ENCODE measurements at regions of chr11 and their contacts with region 1.

Region 1: GRCh38 chr11:128757235-128757711 is 63.4 kb downstream of the FLI1 start:
- DNase-seq: peak; percentile 48 to 90 (median 71)
- ATAC-seq: peak; percentile 99
- H3K4me3 ChIP-seq: no peak overlapping the region
- H3K4me3 Mint-ChIP-seq: peak overlapping the region; percentile 35
- H3K27ac ChIP-seq: peak overlapping the region in 1 of 2 experiments; percentile 30
- H3K27ac Mint-ChIP-seq: peak overlapping the region; percentile 88
- H3K4me1 ChIP-seq: peaks cover 67% of the 10 kb centered on the region
- H3K4me1 Mint-ChIP-seq: peaks cover 89% of the 10 kb centered on the region
- H3K27me3 ChIP-seq: no peaks in the 10 kb centered on the region
- H3K27me3 Mint-ChIP-seq: no peaks in the 10 kb centered on the region
- CTCF ChIP-seq: peak; percentile 76

Region 2: DNA sequence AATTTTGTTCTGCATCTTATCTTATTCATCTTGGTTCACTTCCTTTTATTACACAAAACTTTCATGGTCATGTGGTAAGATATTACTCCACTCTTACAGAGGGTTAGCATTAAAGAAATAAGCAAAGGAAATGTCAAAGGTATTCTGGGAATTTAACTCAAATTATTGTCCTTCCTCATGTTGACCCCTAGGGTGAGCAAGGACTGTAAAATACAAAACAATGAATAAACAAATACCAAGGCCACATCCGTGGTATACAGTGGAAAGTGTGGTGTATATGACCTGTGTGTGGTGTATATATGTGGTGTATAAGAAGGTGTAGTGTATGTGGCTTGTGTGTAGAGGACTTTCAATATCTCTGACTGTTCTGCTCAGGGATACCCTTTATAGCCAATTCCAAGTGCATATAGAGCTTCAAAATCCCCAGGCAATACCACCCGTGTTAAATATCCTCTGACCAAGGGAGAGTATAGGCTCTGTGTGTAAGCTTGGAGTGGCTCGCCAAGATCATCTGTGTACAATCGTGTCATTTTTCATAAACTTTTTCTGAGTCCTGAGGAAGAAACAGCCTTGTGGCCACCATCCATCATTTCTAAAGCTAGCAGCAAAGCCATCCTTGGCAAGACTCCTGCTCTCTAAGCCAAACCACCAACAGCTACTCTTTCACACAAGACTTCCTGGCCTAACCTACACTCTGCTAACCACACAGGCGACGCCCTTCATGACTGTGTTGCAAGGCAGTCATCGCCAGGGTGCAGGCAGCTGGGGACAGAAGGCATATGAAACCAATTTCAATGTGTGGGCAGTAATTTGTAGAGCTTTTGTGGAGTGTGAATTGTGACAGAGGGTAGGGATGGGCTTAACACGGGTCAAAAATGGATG is 717.9 kb before region 1 on chr11:
- CTCF ChIA-PET with region 1: no interaction called
- POLR2A ChIA-PET with region 1: interaction called, 3 read pairs
- intact Hi-C with region 1: loop called in 1 of 2 experiments (anchors 5 kb)
- DNase-seq: peak; percentile 48 to 94 (median 79)
- ATAC-seq: peak; percentile 91
- H3K4me3 ChIP-seq: peak overlapping the region; percentile 40 to 50
- H3K4me3 Mint-ChIP-seq: peak overlapping the region; percentile 59
- H3K27ac ChIP-seq: peak overlapping the region; percentile 55 to 80
- H3K27ac Mint-ChIP-seq: peak overlapping the region; percentile 87
- H3K4me1 ChIP-seq: peaks cover 76% of the 10 kb centered on the region
- H3K4me1 Mint-ChIP-seq: peaks cover 56% of the 10 kb centered on the region
- H3K27me3 ChIP-seq: no peaks in the 10 kb centered on the region
- H3K27me3 Mint-ChIP-seq: no peaks in the 10 kb centered on the region
- CTCF ChIP-seq: peak; percentile 22

Region 3: GRCh38 chr11:128512474-128512996 is 244.7 kb before region 1 on chr11:
- CTCF ChIA-PET with region 1: interaction called, 4 read pairs
- POLR2A ChIA-PET with region 1: no interaction called
- intact Hi-C with region 1: loop called (anchors 2 to 5 kb)
- DNase-seq: peak in 4 of 9 experiments; percentile 37 to 58 (median 44)
- ATAC-seq: peak; percentile 13
- H3K4me3 ChIP-seq: peak overlapping the region; percentile 45 to 94
- H3K4me3 Mint-ChIP-seq: peak overlapping the region; percentile 98
- H3K27ac ChIP-seq: peak overlapping the region; percentile 33 to 75
- H3K27ac Mint-ChIP-seq: peak overlapping the region; percentile 98
- H3K4me1 ChIP-seq: peaks cover 71% of the 10 kb centered on the region
- H3K4me1 Mint-ChIP-seq: peaks cover 91% of the 10 kb centered on the region
- H3K27me3 ChIP-seq: no peaks in the 10 kb centered on the region
- H3K27me3 Mint-ChIP-seq: no peaks in the 10 kb centered on the region
- CTCF ChIP-seq: no peak

Region 4: GRCh38 chr11:128686745-128687177 is 70.5 kb before region 1 on chr11:
- CTCF ChIA-PET with region 1: interaction called, 8 read pairs
- POLR2A ChIA-PET with region 1: interaction called, 6 read pairs
- intact Hi-C with region 1: loop called (anchors 2 to 10 kb)
- DNase-seq: peak in 7 of 9 experiments; percentile 41 to 73 (median 66)
- ATAC-seq: peak; percentile 81
- H3K4me3 ChIP-seq: peak overlapping the region; percentile 53 to 61
- H3K4me3 Mint-ChIP-seq: peak overlapping the region; percentile 86
- H3K27ac ChIP-seq: no peak overlapping the region
- H3K27ac Mint-ChIP-seq: no peak overlapping the region
- H3K4me1 ChIP-seq: peaks cover 34% of the 10 kb centered on the region
- H3K4me1 Mint-ChIP-seq: peaks cover 41% of the 10 kb centered on the region
- H3K27me3 ChIP-seq: peaks cover 4 to 32% of the 10 kb centered on the region in 2 experiments
- H3K27me3 Mint-ChIP-seq: peaks cover 29% of the 10 kb centered on the region
- CTCF ChIP-seq: no peak

Region 5: GRCh38 chr11:128716661-128717210 is 40.5 kb before region 1 on chr11:
- CTCF ChIA-PET with region 1: interaction called, 11 read pairs
- POLR2A ChIA-PET with region 1: no interaction called
- intact Hi-C with region 1: no loop called
- DNase-seq: peak in 6 of 9 experiments; percentile 55 to 85 (median 70)
- ATAC-seq: peak; percentile 64
- H3K4me3 ChIP-seq: peak overlapping the region; percentile 9 to 14
- H3K4me3 Mint-ChIP-seq: peak overlapping the region; percentile 80
- H3K27ac ChIP-seq: peak overlapping the region; percentile 50 to 81
- H3K27ac Mint-ChIP-seq: peak overlapping the region; percentile 99
- H3K4me1 ChIP-seq: peaks cover 97% of the 10 kb centered on the region
- H3K4me1 Mint-ChIP-seq: peaks cover 99% of the 10 kb centered on the region
- H3K27me3 ChIP-seq: no peaks in the 10 kb centered on the region
- H3K27me3 Mint-ChIP-seq: no peaks in the 10 kb centered on the region
- CTCF ChIP-seq: no peak

Region 6: DNA sequence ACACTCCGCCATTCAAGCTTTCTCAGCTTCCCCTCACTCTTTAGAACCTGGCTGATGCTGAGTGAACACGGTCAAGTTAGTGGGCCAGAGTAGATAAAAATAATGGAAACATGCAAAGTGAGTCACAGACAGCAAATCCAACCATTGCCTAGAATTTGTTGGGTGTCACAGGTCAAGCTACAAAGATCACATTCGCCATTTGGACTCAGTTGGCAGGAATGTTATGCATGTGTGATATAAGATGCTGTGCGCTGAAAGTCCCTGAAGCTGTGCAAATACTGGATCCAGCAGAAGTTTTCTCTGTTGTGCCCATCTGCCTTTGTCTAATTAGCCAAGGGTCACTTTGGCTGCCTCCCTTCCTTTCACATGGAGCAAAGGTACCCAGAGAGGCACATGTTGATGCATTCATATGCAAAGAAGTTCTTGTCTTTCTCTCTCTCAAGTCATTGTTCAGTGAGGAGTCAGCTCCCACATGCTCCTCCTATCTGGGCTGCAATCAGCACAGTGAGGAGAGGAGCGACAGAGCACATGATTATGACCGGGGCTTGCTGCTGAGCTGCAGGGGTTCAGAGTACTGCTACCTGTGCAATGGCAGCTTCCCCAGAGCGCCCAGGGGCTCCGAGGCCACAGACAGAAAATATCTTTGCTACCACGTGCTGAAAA is 23.7 kb before region 1 on chr11:
- CTCF ChIA-PET with region 1: interaction called, 11 read pairs
- POLR2A ChIA-PET with region 1: interaction called, 4 read pairs
- intact Hi-C with region 1: no loop called
- DNase-seq: peak in 6 of 9 experiments; percentile 31 to 64 (median 50)
- ATAC-seq: peak; percentile 50
- H3K4me3 ChIP-seq: peak overlapping the region in 1 of 2 experiments; percentile 4
- H3K4me3 Mint-ChIP-seq: peak overlapping the region; percentile 76
- H3K27ac ChIP-seq: peak overlapping the region in 1 of 2 experiments; percentile 64
- H3K27ac Mint-ChIP-seq: peak overlapping the region; percentile 91
- H3K4me1 ChIP-seq: peaks cover 99% of the 10 kb centered on the region
- H3K4me1 Mint-ChIP-seq: peaks cover 99% of the 10 kb centered on the region
- H3K27me3 ChIP-seq: no peaks in the 10 kb centered on the region
- H3K27me3 Mint-ChIP-seq: no peaks in the 10 kb centered on the region
- CTCF ChIP-seq: no peak

Region 7: DNA sequence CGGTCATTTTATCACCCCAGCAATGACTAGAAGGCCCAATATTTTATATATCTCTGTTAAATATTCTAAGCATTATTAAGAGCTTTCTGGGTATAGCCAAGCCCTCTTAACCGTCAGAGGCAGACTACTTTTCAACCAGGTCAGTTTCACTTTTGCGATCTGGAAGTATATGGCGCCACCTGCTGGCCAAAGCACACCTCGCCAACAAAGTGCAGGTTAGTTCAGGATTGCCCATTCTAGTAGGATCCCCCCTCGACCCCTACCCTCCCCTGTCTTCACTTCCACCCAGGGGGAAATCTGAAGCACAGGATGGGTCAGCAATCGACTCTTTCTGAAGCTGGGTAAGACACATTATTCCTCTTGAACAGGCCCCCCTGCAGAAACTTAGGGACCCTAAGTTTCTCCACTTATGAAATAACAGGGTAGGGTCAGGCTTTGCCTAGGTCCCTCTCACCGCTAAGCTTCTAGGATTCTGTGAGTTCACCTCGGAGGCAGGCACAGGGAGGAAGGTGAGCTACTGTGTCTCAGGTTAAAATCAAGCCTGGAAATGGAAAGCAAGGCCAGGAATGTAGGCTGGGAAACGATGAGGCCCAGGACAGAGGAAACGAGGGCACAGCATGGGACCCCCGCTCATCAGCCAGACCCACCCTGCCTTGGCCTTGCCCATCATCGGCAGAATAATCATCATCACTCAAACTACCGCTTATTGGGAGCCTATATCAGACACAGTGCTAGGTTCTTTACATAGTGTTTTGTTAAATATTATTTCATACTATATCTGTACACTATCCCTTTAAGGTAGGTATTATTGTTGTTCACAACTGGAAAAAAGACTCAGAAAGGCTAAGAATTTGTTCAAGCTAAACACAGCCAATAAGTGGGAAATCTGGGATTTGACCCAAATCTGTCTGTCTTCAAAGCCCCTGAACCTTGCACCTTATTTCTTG is 74.2 kb after region 1 on chr11:
- CTCF ChIA-PET with region 1: interaction called, 11 read pairs
- POLR2A ChIA-PET with region 1: no interaction called
- intact Hi-C with region 1: loop called (anchors 2 to 5 kb)
- DNase-seq: peak; percentile 75 to 93 (median 88)
- ATAC-seq: peak; percentile 81
- H3K4me3 ChIP-seq: peak overlapping the region; percentile 11 to 26
- H3K4me3 Mint-ChIP-seq: peak overlapping the region; percentile 55
- H3K27ac ChIP-seq: peak overlapping the region; percentile 31 to 84
- H3K27ac Mint-ChIP-seq: peak overlapping the region; percentile 80
- H3K4me1 ChIP-seq: peaks cover 9% of the 10 kb centered on the region
- H3K4me1 Mint-ChIP-seq: peaks cover 18% of the 10 kb centered on the region
- H3K27me3 ChIP-seq: no peaks in the 10 kb centered on the region
- H3K27me3 Mint-ChIP-seq: no peaks in the 10 kb centered on the region
- CTCF ChIP-seq: peak; percentile 87